SK-N-SH (cell line): ENCODE measurements at regions of chr7 and their contacts with region 1.

Region 1: GRCh38 chr7:5494683-5495561 is 71.3 kb upstream of the TNRC18 start:
- DNase-seq: peak; percentile 95
- H3K4me3 ChIP-seq: peak overlapping the region in 1 of 2 experiments; percentile 36; a peak in 1 of 4 replicates
- H3K27ac ChIP-seq: 0 out of 4 replicates have a peak overlapping the region, but pooled peaks of 1 of the 2 experiments have one; percentile 1
- H3K4me1 ChIP-seq: peaks cover 5 to 30% of the 10 kb centered on the region in 2 experiments; a peak in 3 of 4 replicates
- H3K27me3 ChIP-seq: no peaks in the 10 kb centered on the region
- CTCF ChIP-seq: peak; percentile 99
- EP300 ChIP-seq: no peak
- RAD21 ChIP-seq: peak; percentile 98

Region 2: GRCh38 chr7:5231811-5232484 is 263.0 kb before region 1 on chr7:
- CTCF ChIA-PET with region 1: no interaction called
- POLR2A ChIA-PET with region 1: no interaction called
- DNase-seq: no peak
- H3K4me3 ChIP-seq: no peak overlapping the region
- H3K27ac ChIP-seq: no peak overlapping the region
- H3K4me1 ChIP-seq: no peaks in the 10 kb centered on the region
- H3K27me3 ChIP-seq: no peaks in the 10 kb centered on the region
- CTCF ChIP-seq: no peak
- EP300 ChIP-seq: no peak
- RAD21 ChIP-seq: no peak

Region 3: DNA sequence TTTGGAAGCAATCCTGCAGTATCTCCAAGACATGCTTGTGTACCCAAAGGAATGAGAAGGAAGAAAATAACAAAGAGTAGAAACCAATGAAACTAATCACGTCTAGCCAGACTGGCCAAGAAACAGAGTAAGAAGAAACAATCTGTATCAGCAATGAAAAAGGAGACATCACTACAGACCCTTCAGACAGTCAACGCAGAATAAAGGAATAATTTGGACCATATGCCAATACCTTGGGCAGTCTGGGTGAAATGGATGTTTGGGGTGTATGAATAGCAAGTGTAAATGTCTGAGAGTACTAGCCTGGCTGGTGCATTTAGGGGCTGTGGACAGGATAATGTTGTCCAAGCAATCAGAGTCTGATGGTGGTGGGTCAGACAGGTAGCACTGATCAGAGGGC is 151.0 kb before region 1 on chr7:
- CTCF ChIA-PET with region 1: no interaction called
- POLR2A ChIA-PET with region 1: no interaction called
- DNase-seq: no peak
- H3K4me3 ChIP-seq: no peak overlapping the region; a peak in 1 of 4 replicates
- H3K27ac ChIP-seq: no peak overlapping the region
- H3K4me1 ChIP-seq: no peaks in the 10 kb centered on the region
- H3K27me3 ChIP-seq: no peaks in the 10 kb centered on the region
- CTCF ChIP-seq: no peak
- EP300 ChIP-seq: no peak
- RAD21 ChIP-seq: no peak

Region 4: DNA sequence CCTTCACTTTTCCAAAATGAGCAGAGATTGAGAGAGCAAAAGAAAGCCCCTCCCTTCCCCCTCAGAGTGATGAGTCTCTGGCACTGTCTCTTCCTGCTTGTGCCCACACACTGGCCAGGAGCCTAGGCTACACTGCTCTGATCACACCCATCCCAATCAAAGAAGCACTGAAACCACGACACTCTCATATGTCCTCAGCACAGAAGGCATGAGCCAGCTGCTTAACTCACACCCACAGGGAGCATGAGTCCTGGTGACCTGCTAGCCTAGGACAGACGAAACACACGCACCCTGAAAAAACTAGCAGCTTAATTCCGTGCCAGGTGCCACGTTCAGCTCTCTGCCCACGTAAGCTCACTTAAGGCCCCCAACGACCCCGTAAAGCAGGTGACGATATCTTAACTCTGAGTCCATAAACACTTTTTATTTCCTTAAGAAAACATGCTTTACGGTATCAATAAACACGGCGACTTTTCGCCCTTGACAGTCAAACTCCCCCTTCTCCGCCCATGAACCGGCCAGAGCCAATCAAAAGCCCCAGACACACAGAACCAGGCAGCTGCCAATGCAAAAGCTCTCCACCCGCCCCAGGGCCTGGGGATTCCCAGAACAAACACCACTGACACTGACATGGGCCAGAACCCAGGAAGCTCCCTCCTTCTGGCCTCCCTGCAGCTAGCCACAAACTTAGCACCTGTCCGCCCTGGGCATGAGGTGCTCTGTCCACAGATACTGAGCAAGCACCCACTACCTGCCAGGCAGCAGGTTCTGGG is 140.3 kb before region 1 on chr7:
- CTCF ChIA-PET with region 1: interaction called, 17 read pairs
- POLR2A ChIA-PET with region 1: no interaction called
- DNase-seq: peak; percentile 99
- H3K4me3 ChIP-seq: peak overlapping the region in 1 of 2 experiments; percentile 20; a peak in 1 of 4 replicates
- H3K27ac ChIP-seq: peak overlapping the region in 1 of 2 experiments; percentile 56; a peak in 2 of 4 replicates
- H3K4me1 ChIP-seq: peaks cover 12 to 15% of the 10 kb centered on the region in 2 experiments; a peak in 2 of 4 replicates
- H3K27me3 ChIP-seq: no peaks in the 10 kb centered on the region
- CTCF ChIP-seq: no peak
- EP300 ChIP-seq: peak in 1 of 2 experiments; percentile 83; a peak in 2 of 4 replicates
- RAD21 ChIP-seq: 0 out of 2 replicates have a peak, but pooled peaks have one; percentile 15

Region 5: GRCh38 chr7:5450549-5451372 is 44.2 kb before region 1 on chr7:
- CTCF ChIA-PET with region 1: interaction called, 10 read pairs
- POLR2A ChIA-PET with region 1: no interaction called
- DNase-seq: peak; percentile 94
- H3K4me3 ChIP-seq: no peak overlapping the region; a peak in 1 of 4 replicates
- H3K27ac ChIP-seq: no peak overlapping the region
- H3K4me1 ChIP-seq: peaks cover 0 to 3% of the 10 kb centered on the region in 2 experiments; a peak in 1 of 4 replicates
- H3K27me3 ChIP-seq: no peaks in the 10 kb centered on the region
- CTCF ChIP-seq: peak; percentile 78
- EP300 ChIP-seq: no peak
- RAD21 ChIP-seq: peak; percentile 85

Region 6: GRCh38 chr7:5507013-5507412 is 12.1 kb after region 1 on chr7:
- CTCF ChIA-PET with region 1: interaction called, 43 read pairs
- POLR2A ChIA-PET with region 1: interaction called, 5 read pairs
- DNase-seq: peak; percentile 32
- H3K4me3 ChIP-seq: no peak overlapping the region
- H3K27ac ChIP-seq: no peak overlapping the region
- H3K4me1 ChIP-seq: peaks cover 0 to 10% of the 10 kb centered on the region in 2 experiments; a peak in 2 of 4 replicates
- H3K27me3 ChIP-seq: no peaks in the 10 kb centered on the region
- CTCF ChIP-seq: no peak
- EP300 ChIP-seq: no peak
- RAD21 ChIP-seq: no peak

Region 7: GRCh38 chr7:5557920-5558401 is 63.0 kb after region 1 on chr7:
- CTCF ChIA-PET with region 1: interaction called, 32 read pairs
- POLR2A ChIA-PET with region 1: interaction called, 4 read pairs
- DNase-seq: peak; percentile 43
- H3K4me3 ChIP-seq: no peak overlapping the region
- H3K27ac ChIP-seq: peak overlapping the region in 1 of 2 experiments; percentile 31; a peak in 2 of 4 replicates
- H3K4me1 ChIP-seq: peaks cover 6 to 23% of the 10 kb centered on the region in 2 experiments; a peak in 3 of 4 replicates
- H3K27me3 ChIP-seq: no peaks in the 10 kb centered on the region
- CTCF ChIP-seq: no peak
- EP300 ChIP-seq: no peak
- RAD21 ChIP-seq: no peak

Region 8: GRCh38 chr7:5689118-5689517 is 194.2 kb after region 1 on chr7:
- CTCF ChIA-PET with region 1: interaction called, 18 read pairs
- POLR2A ChIA-PET with region 1: no interaction called
- DNase-seq: no peak
- H3K4me3 ChIP-seq: no peak overlapping the region
- H3K27ac ChIP-seq: peak overlapping the region in 1 of 2 experiments; percentile 99; a peak in 2 of 4 replicates
- H3K4me1 ChIP-seq: peaks cover 43 to 54% of the 10 kb centered on the region in 2 experiments
- H3K27me3 ChIP-seq: no peaks in the 10 kb centered on the region
- CTCF ChIP-seq: no peak
- EP300 ChIP-seq: no peak
- RAD21 ChIP-seq: no peak

Region 9: DNA sequence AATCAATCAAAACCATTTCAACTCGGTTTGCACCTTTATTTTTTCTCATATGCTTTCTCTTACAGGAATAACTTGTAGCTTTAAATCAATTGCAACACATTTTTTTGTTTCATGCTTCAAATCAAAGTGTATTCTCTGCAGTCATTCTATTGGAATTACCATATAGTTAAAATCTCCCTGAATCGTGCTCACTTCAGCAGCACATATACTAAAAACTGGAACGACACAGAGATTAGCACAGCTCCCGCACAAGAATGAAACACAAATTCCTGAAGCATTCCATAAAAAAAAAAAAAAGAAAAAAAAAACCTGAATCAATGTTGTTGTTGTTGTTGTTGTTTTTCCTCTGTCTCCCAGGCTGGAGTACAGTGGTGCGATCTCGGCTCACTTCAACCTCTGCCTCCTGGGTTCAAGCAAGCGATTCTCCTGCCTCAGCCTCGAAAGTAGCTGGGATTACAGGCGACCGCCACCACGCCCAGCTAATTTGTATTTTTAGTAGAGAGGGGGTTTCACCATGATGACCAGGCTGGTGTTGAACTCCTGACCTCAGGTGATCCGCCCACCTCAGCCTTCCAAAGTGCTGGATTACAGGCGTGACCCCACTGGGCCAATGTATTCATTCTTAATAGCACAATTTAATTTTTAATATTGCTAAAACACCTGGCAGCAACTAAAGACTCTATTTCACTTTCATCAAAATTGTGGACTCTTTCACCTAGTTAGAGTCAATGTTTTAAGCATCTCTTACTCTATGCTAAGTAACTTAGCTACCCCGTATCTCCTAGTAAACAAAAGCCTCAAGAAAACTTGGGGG is 562.6 kb after region 1 on chr7:
- CTCF ChIA-PET with region 1: no interaction called
- POLR2A ChIA-PET with region 1: no interaction called
- DNase-seq: no peak
- H3K4me3 ChIP-seq: peak overlapping the region; percentile 65 to 89
- H3K27ac ChIP-seq: peak overlapping the region in 1 of 2 experiments; percentile 75; a peak in 2 of 4 replicates
- H3K4me1 ChIP-seq: peaks cover 5 to 10% of the 10 kb centered on the region in 2 experiments; a peak in 2 of 4 replicates
- H3K27me3 ChIP-seq: no peaks in the 10 kb centered on the region
- CTCF ChIP-seq: no peak
- EP300 ChIP-seq: no peak
- RAD21 ChIP-seq: no peak